ENCODE measurements at regions of chr17 and their contacts with region 1.

Region 1: DNA sequence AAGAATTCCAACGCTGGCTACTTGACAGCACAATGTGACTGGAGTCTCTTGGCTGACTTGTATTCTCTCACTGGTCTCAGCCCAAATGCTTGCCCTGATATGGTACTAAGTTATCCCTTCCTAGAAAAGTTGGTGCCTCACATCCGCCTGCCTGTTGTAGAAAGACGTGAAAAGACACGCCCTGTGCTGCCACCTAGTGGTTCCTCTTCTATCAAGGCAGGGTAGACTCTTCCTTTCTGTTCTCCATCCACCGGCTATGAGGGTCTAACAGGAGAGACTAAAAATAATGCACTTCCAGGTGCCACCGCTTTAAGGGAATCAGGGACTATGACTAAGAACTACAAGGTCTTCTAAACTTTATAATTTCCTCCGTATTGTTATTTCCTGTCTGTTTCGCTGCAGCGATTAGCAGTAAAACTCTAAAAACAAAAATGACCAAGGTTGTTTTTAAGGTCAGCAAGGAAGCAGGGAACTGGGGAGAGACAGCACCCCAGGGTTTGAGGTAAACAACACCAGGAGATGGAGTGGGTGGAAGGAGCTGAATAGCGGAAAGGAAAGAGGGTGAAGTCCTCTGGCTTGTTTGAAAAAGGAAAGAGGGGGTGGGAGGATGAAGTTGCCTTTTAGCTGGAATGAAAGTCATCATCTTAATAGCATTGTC is 109.5 kb downstream of the YPEL2 start:
- H3K4me3 ChIP-seq: no peak overlapping the region
- H3K27ac ChIP-seq: no peak overlapping the region
- H3K4me1 ChIP-seq: peaks cover 5% of the 10 kb centered on the region; the same call in 1 of the 2 replicates
- CTCF ChIP-seq: peak; percentile 69

Region 2: DNA sequence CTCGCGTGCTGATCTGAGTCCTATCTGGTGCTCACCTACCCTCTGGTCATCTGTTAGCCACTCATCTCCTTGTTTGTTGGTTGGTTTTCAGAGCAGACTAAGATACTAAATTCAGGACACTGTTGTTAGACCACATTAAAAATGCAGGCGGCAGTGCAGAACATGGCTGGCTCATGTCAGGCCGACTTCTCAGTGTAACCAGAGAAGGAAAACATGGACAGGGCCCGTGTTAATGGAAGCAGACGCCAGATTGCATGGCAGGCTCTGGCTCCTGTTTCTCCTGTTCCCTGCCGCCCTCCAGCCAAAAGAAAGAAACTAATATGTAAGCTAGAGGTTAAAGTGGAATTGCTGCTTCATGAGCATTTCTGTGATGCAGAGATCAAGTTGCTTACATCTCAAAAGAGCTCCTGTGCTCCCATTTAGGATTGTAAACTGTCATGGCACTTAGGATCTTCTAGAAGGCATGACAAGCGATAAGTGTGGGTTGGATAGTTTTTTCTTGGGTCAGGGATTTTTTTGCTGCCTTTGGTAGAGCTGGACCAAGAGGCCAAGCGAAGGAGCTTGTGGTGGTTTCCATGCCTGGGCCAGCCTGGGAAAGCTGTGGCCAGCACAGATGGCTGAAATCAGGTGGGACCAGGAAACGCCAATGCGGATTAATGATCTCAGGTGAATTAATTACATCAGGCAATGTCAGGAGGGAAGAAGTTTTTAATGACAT is 53.4 kb before region 1 on chr17:
- CTCF ChIA-PET with region 1: no interaction called
- POLR2A ChIA-PET with region 1: no interaction called
- H3K4me3 ChIP-seq: no peak overlapping the region
- H3K27ac ChIP-seq: no peak overlapping the region
- H3K4me1 ChIP-seq: no peaks in the 10 kb centered on the region
- CTCF ChIP-seq: no peak

Region 3: GRCh38 chr17:59427425-59427921 is 13.4 kb before region 1 on chr17:
- CTCF ChIA-PET with region 1: interaction called, 19 read pairs
- POLR2A ChIA-PET with region 1: no interaction called
- H3K4me3 ChIP-seq: no peak overlapping the region
- H3K27ac ChIP-seq: no peak overlapping the region
- H3K4me1 ChIP-seq: no peaks in the 10 kb centered on the region; the same call in 1 of the 2 replicates
- CTCF ChIP-seq: no peak

Region 4: GRCh38 chr17:59451706-59452105 is 10.8 kb after region 1 on chr17:
- CTCF ChIA-PET with region 1: interaction called, 14 read pairs
- POLR2A ChIA-PET with region 1: no interaction called
- H3K4me3 ChIP-seq: no peak overlapping the region
- H3K27ac ChIP-seq: no peak overlapping the region
- H3K4me1 ChIP-seq: no peaks in the 10 kb centered on the region
- CTCF ChIP-seq: no peak

Region 5: DNA sequence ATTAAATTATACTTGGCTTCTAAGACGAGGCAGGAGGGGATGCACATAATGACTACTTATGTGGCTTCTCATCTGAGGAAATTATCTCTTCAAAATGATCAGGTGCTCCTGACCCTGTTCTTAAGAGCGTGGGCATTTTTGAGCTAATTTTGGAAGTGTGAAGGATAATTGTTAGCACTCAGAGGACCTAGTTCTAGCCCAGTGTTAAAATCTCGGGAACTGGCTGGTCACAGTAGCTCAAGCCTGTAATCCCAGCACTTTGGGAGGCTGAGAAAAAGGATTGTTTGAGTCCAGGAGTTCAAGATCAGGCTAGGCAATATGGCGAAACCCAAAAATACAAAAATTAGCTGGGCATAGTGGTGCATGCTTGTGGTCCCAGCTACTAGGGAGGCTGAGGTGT is 21.5 kb after region 1 on chr17:
- CTCF ChIA-PET with region 1: interaction called, 14 read pairs
- POLR2A ChIA-PET with region 1: no interaction called
- H3K4me3 ChIP-seq: no peak overlapping the region
- H3K27ac ChIP-seq: no peak overlapping the region
- H3K4me1 ChIP-seq: no peaks in the 10 kb centered on the region
- CTCF ChIP-seq: no peak

Region 6: DNA sequence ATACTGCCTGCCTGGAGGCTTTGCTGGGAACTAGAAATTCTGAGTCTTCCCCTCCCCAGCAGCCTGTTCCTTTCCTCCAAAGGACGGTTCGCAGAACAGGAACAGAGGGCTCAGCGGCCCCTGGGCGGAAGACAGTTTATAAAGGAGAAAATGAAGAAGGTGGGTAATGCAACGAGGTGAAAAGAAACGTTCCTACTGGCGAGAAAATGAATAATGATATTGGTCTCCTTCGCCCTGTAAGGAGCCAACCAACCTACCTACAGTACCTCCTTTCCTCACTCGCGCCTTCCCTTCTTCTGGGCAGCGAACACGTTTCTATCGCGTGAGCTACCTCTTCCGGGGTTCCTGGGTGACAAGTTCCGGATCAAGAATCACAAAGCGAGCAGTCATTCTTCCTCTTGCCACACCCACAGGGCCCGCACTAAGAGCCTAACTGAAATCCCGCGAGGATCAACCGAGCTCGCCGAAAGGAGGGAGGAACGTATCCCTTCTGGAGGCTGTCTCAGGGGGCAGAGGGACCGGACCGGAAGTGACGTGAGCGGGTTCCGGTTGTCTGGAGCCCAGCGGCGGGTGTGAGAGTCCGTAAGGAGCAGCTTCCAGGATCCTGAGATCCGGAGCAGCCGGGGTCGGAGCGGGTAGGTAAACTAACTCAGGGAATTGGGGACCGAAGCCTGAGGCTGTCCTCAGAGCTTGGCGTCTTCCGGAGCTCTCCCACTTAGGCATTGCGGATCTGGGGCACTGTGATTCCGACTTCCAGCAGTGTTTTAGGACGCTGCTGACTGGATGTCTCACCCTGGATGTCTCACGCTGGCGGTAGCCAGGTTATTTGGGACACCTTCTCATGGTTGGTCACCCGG is 266.4 kb after region 1 on chr17 and contains the starts of genes PTRH2 and VMP1:
- CTCF ChIA-PET with region 1: no interaction called
- POLR2A ChIA-PET with region 1: no interaction called
- H3K4me3 ChIP-seq: peak within 1 kb of the TSS; percentile 95
- H3K27ac ChIP-seq: peak within 1 kb of the TSS; percentile 90
- H3K4me1 ChIP-seq: peaks cover 16% of the 10 kb centered on the region
- CTCF ChIP-seq: no peak; the same call in 1 of the 2 replicates